Activated naive CD4-positive, alpha-beta T cell treated with anti-CD3 and anti-CD28 coated beads for 36 hours (primary cell): ENCODE measurements at regions of chr2 and their contacts with region 1.

Region 1: GRCh38 chr2:157898591-157898996 is 22.5 kb upstream of the ACVR1 start:
- DNase-seq: peak; percentile 87
- H3K4me3 Mint-ChIP-seq: peak overlapping the region; percentile 76
- H3K27ac Mint-ChIP-seq: peak overlapping the region; percentile 99
- H3K4me1 Mint-ChIP-seq: peaks cover 77% of the 10 kb centered on the region
- H3K27me3 Mint-ChIP-seq: no peaks in the 10 kb centered on the region

Region 2: DNA sequence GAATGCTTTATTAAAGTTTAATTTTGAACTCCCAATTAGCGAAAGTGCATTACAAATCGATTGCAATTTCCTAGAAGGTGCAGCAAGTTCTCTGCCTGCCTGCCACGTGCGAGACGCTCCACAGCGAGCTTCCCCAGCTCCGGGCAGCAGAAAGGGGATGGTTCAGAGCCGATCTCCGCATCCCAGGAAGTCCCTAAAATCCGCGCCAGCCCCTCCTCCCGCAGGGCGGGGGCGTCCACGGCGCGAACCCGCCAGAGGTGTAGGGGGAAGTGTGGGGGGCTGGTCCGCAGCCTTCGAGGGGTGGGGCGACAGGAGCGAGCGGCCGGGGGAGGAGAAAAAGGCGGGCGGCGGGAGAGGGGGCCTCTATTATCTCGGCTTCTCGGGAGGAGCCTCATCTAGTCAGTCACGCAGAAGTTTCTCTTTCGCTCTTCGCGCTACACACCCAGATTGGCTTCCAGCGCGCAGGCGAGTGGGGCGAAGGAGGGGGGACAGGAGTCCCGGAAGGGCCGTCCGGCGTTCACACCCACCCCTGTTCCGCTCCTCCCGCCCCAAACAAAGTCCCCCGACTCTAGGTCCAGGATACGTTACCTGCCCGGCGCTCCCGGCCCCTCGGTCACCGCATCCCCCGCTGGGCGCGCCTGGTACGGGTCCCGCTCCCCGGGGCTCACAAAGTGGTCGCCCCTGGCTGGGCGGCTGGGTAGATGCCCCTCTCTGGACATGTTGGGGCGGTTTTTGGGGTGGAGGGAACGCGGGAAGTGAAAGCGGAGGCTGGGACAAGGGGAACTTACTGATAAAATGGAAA is 1556.9 kb before region 1 on chr2:
- CTCF ChIA-PET with region 1: no interaction called
- intact Hi-C with region 1: loop called (anchors 2 kb)
- DNase-seq: peak; percentile 94
- H3K4me3 Mint-ChIP-seq: peak overlapping the region; percentile 84
- H3K27ac Mint-ChIP-seq: peak overlapping the region; percentile 96
- H3K4me1 Mint-ChIP-seq: peaks cover 50% of the 10 kb centered on the region
- H3K27me3 Mint-ChIP-seq: no peaks in the 10 kb centered on the region

Region 3: GRCh38 chr2:157404363-157404762 is 494.2 kb before region 1 on chr2:
- CTCF ChIA-PET with region 1: no interaction called
- intact Hi-C with region 1: loop called (anchors 2 kb)
- DNase-seq: peak; percentile 80
- H3K4me3 Mint-ChIP-seq: no peak overlapping the region
- H3K27ac Mint-ChIP-seq: peak overlapping the region; percentile 72
- H3K4me1 Mint-ChIP-seq: peaks cover 76% of the 10 kb centered on the region
- H3K27me3 Mint-ChIP-seq: no peaks in the 10 kb centered on the region

Region 4: GRCh38 chr2:157492189-157492773 is 406.3 kb before region 1 on chr2:
- CTCF ChIA-PET with region 1: no interaction called
- intact Hi-C with region 1: loop called (anchors 2 kb)
- DNase-seq: peak; percentile 89
- H3K4me3 Mint-ChIP-seq: no peak overlapping the region
- H3K27ac Mint-ChIP-seq: no peak overlapping the region
- H3K4me1 Mint-ChIP-seq: peaks cover 62% of the 10 kb centered on the region
- H3K27me3 Mint-ChIP-seq: no peaks in the 10 kb centered on the region

Region 5: GRCh38 chr2:157857881-157858280 is 40.7 kb before region 1 on chr2:
- CTCF ChIA-PET with region 1: no interaction called
- intact Hi-C with region 1: loop called (anchors 1 kb)
- DNase-seq: no peak
- H3K4me3 Mint-ChIP-seq: no peak overlapping the region
- H3K27ac Mint-ChIP-seq: no peak overlapping the region
- H3K4me1 Mint-ChIP-seq: peaks cover 37% of the 10 kb centered on the region
- H3K27me3 Mint-ChIP-seq: no peaks in the 10 kb centered on the region

Region 6: GRCh38 chr2:158191076-158191895 is 292.7 kb after region 1 on chr2:
- CTCF ChIA-PET with region 1: no interaction called
- intact Hi-C with region 1: loop called (anchors 1 kb)
- DNase-seq: peak; percentile 66
- H3K4me3 Mint-ChIP-seq: no peak overlapping the region
- H3K27ac Mint-ChIP-seq: peak overlapping the region; percentile 32
- H3K4me1 Mint-ChIP-seq: peaks cover 25% of the 10 kb centered on the region
- H3K27me3 Mint-ChIP-seq: peaks cover 29% of the 10 kb centered on the region